Activated CD8-positive, alpha-beta T cell treated with anti-CD3 and anti-CD28 coated beads, Interleukin-2, amount 10 ng/mL, durations not matched to agents 7 days and 5 days (primary cell): ENCODE measurements at regions of chr5 and their contacts with region 1.

Region 1: DNA sequence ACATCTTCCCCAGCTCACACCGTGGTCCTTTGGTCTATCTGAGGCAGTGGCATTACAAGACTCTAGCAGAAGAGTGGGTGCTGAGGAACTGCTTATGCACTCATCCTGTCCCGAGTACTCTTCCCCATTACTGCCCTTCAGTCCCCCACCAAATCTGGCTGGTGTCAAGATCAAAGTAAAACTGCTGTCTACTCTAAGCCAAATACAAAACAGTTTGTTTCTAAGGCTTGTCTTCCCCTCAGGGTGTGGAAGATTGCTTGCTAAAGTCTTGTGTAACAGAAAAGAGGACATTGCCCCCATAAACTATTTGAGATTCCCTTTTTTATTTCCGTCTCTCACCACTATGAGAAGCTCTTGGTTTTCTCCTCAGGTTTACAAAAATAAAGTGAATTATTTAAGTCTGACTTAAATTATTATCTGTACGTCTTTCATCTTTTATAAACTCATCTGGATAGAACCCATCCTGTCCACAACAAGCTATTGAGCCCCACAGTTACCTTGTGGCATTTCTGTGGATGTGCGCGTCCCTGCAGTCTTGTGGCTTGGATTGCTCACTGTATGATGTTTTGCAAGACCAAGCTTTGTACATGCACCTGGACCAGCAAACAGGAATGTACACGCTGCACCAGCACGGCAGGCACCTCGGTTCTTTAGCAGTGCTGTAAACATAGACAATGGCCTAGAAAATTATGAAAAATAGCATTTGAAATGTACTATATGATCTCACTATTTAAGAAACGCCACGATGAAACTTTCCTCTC is 61.0 kb downstream of the CYSTM1 start:
- DNase-seq: no peak
- ATAC-seq: no peak
- H3K4me3 Mint-ChIP-seq: no peak overlapping the region
- H3K27ac Mint-ChIP-seq: no peak overlapping the region
- H3K4me1 Mint-ChIP-seq: no peaks in the 10 kb centered on the region
- H3K27me3 Mint-ChIP-seq: peaks cover 11% of the 10 kb centered on the region

Region 2: GRCh38 chr5:140133514-140134167 is 102.3 kb before region 1 on chr5:
- CTCF ChIA-PET with region 1: no interaction called
- POLR2A ChIA-PET with region 1: no interaction called
- DNase-seq: peak; percentile 17
- ATAC-seq: no peak
- H3K4me3 Mint-ChIP-seq: no peak overlapping the region
- H3K27ac Mint-ChIP-seq: no peak overlapping the region
- H3K4me1 Mint-ChIP-seq: peaks cover 39% of the 10 kb centered on the region
- H3K27me3 Mint-ChIP-seq: no peaks in the 10 kb centered on the region

Region 3: DNA sequence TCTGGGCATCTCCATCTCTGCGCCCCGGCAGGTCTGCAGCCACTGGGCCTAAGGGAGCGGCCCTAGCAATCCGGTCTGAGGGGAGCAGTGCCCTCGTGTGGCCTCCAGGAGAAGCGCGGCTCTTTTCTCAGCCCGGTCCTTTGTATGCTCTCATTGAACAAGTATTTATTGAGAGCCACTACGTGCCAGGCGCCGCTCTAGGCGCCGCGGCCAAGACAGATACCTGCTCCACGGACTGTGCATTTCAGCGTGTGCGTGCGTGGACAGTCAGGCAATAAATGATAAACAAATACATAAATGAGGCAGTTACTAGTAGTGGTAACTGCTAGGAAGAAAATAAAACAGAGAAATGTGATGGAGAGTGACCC is 121.7 kb after region 1 on chr5:
- CTCF ChIA-PET with region 1: interaction called, 796 read pairs
- POLR2A ChIA-PET with region 1: no interaction called
- DNase-seq: peak; percentile 87
- ATAC-seq: peak; percentile 98
- H3K4me3 Mint-ChIP-seq: peak overlapping the region; percentile 70
- H3K27ac Mint-ChIP-seq: peak overlapping the region; percentile 73
- H3K4me1 Mint-ChIP-seq: peaks cover 15% of the 10 kb centered on the region
- H3K27me3 Mint-ChIP-seq: peaks cover 9% of the 10 kb centered on the region